ENCODE measurements at regions of chr2 and their contacts with region 1.

Region 1: GRCh38 chr2:106542811-106543259 is 55.7 kb downstream of the CD8B2 start:
- DNase-seq: peak; percentile 60
- H3K4me3 Mint-ChIP-seq: peak overlapping the region; percentile 76
- H3K27ac Mint-ChIP-seq: no peak overlapping the region
- H3K4me1 Mint-ChIP-seq: peaks cover 5% of the 10 kb centered on the region
- H3K27me3 Mint-ChIP-seq: peaks cover 27% of the 10 kb centered on the region

Region 2: GRCh38 chr2:106104332-106105062 is 438.3 kb before region 1 on chr2:
- intact Hi-C with region 1: loop called (anchors 1 kb)
- DNase-seq: peak; percentile 62
- H3K4me3 Mint-ChIP-seq: no peak overlapping the region
- H3K27ac Mint-ChIP-seq: peak overlapping the region; percentile 18
- H3K4me1 Mint-ChIP-seq: peaks cover 16% of the 10 kb centered on the region
- H3K27me3 Mint-ChIP-seq: no peaks in the 10 kb centered on the region

Region 3: GRCh38 chr2:106269591-106270291 is 273.1 kb before region 1 on chr2:
- intact Hi-C with region 1: loop called (anchors 10 kb)
- DNase-seq: peak; percentile 9
- H3K4me3 Mint-ChIP-seq: peak overlapping the region; percentile 81
- H3K27ac Mint-ChIP-seq: no peak overlapping the region
- H3K4me1 Mint-ChIP-seq: peaks cover 20% of the 10 kb centered on the region
- H3K27me3 Mint-ChIP-seq: peaks cover 20% of the 10 kb centered on the region

Region 4: DNA sequence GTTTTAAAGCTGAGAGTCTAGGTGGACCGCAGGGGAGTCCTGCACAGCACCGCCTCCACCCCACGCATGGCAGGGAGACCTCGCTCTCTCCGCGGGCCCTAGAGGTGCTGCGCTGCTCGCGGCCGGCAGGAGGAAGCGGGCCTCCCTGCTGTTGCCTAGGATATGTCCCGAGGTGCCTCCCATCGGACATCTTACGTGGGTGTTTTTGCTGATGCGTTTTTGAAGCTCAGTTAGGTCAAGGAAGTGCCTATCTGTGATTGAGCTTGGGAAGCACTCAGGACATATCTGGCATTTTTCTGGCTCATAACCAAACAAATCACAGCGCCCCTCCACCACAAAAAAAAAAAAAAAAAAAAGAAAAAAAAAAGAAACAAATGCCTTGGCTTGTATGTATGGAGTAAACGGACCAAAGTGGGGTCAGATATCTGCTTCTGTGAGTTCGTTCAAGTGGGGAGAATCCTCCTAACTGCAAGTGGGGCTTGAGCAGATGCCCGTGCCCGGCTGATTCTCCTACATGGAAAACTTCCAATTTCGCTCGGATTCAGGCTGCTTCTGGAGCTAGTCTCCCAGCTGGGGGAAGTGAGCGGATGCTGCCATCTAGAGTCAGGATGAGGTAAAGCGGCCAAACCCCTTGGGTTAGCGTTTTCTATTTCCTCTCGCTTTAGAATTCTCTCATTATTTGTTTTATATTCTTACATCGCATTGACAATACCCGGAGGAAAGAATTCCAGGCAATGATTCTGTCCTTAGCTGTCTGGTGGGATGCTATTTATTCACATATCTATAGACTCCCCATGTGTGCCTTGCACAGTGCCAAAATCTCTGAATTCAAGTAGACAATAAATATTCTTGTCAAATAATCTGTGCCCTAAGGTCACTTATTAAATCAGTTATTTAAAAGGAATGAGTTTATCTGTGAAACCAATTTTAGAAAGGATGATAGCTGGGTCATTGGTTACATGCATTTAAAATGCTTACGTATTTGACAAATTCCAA is 39.6 kb after region 1 on chr2:
- intact Hi-C with region 1: loop called (anchors 2 kb)
- DNase-seq: peak; percentile 36
- H3K4me3 Mint-ChIP-seq: peak overlapping the region; percentile 85
- H3K27ac Mint-ChIP-seq: no peak overlapping the region
- H3K4me1 Mint-ChIP-seq: peaks cover 18% of the 10 kb centered on the region
- H3K27me3 Mint-ChIP-seq: peaks cover 24% of the 10 kb centered on the region

Region 5: DNA sequence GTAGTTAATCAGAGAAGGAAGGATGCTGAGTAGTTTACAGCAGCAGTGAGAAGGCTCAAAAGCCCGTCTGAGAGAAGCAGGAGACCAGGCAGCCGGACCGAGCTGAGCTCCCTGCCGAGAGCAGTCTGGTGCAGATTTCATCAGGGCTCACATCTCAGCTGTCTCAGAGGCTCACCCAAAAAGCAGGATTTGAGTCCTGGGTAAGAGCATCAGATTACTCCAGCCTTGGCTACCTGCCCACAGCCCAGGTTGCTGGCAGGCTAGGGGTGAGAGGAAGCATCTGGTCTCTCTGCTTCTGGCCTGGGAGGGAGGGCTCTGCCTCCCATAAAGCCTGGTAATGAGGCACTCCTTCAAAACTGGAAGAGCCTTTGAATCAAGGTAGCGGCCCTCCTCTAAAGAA is 202.6 kb after region 1 on chr2:
- intact Hi-C with region 1: no loop called
- DNase-seq: no peak
- H3K4me3 Mint-ChIP-seq: no peak overlapping the region
- H3K27ac Mint-ChIP-seq: no peak overlapping the region
- H3K4me1 Mint-ChIP-seq: no peaks in the 10 kb centered on the region
- H3K27me3 Mint-ChIP-seq: no peaks in the 10 kb centered on the region